ENCODE measurements at regions of chr1 and their contacts with region 1.

Region 1: GRCh38 chr1:231528172-231529029 is at the start of gene TSNAX:
- DNase-seq: peak; percentile 95
- H3K4me3 ChIP-seq: peak within 1 kb of the TSS; percentile 64 to 71 (median 67)
- H3K27ac ChIP-seq: peak within 1 kb of the TSS; percentile 89 to 93 (median 92)
- H3K4me1 ChIP-seq: peaks cover 0 to 45% (median 34%) of the 10 kb centered on the region in 4 donors
- H3K27me3 ChIP-seq: no peaks in the 10 kb centered on the region
- CTCF ChIP-seq: no peak
- EP300 ChIP-seq: peak in 1 of 4 donors; percentile 5
- POLR2A ChIP-seq: peak; percentile 91 to 95
- total RNA-seq, gene TSNAX: 22.4 to 37.5 (median 30.3) TPM

Region 2: DNA sequence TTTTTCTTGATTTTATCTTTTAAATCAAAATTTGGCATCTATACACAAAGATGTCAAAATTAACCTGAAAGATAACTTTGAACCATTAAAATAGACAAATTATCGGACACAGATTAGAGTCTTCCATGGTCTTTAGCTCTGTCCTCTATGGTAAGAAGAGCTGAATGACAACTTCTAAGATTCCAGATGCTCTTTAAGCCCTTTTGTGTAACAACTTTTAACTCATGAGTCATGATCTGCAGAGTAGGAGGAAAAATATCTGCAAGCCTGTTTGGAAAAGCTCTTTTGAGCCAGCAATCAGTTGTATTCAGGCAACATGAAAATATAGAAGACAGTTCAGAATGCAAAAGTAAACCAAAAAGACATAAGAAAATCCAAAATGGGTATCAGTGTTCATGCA is 587.6 kb before region 1 on chr1:
- intact Hi-C with region 1: no loop called
- DNase-seq: no peak
- H3K4me3 ChIP-seq: no peak overlapping the region
- H3K27ac ChIP-seq: no peak overlapping the region
- H3K4me1 ChIP-seq: peaks cover 0 to 7% (median 3%) of the 10 kb centered on the region in 4 donors
- H3K27me3 ChIP-seq: no peaks in the 10 kb centered on the region
- CTCF ChIP-seq: no peak
- EP300 ChIP-seq: no peak
- POLR2A ChIP-seq: no peak

Region 3: DNA sequence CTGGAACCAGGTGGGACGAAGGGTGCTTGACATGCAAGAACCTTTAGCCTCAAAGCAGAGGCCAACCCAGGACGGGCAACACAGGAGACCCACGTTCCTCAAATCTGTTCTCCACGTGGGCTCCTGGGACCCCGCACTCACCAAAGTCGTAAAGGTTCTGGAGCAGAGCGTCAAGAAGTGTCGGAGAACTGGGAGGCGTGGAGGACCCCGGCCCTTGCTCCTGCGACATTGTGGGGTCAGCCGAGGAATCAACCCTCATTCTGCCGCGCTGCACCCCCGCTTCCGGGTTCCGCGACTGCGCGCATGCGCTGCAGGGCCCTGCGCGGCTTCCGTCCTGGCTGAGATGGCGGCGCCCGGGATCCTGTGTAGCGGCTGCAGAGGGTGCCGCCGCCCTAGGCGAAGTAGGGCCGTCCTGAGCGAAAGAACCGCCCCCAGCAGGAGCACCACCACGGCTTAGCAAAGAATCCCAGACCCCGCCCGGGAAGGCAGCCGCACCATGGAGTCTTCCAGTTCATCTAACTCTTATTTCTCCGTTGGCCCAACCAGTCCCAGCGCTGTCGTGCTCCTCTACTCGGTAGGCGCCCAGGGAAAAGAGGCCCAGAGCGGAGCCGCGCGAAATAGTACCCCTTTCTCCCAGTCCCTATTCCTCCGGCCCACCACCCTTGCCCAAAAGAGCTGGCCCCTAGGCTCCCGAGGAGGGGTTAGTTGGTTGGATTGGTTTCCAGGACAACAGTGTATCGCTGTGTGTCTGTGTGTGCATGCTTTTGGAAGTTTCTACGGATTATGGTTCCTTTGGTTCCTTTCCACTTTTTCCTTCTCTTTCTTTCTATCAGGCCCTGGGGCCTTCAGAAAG is 287.3 kb before region 1 on chr1 and contains the start of gene GNPAT:
- intact Hi-C with region 1: loop called (anchors 2 kb)
- DNase-seq: peak; percentile 92
- H3K4me3 ChIP-seq: peak within 1 kb of the TSS; percentile 72 to 85 (median 80)
- H3K27ac ChIP-seq: peak within 1 kb of the TSS; percentile 79 to 90 (median 84)
- H3K4me1 ChIP-seq: peaks cover 0 to 48% (median 32%) of the 10 kb centered on the region in 4 donors
- H3K27me3 ChIP-seq: no peaks in the 10 kb centered on the region
- CTCF ChIP-seq: no peak
- EP300 ChIP-seq: no peak
- POLR2A ChIP-seq: peak; percentile 74 to 86
- total RNA-seq, gene GNPAT: 45.9 to 58.9 (median 50.5) TPM

Region 4: DNA sequence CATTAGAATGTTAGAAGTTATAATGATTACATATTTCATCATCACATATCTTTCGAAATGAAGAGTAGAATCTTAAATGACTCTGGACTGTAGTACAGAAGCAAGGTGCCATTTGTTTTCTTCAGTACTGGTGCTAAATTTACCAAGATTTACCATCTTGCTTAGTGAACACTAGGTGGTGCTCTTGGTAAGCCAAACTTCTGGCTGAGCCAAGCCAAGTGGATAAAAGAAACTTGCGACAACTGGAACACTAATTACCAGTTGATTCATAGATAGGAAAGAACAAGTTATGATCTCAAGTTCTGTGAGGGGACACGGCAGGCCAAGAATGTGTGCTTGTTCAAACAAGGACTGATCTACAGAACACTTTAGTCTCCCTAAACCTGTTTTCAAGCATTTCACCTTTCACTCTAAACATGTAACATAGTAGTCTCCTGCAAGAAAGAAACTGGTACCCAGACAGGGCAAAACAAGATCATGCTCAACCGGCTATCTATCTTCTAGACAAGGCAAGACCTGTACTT is 170.5 kb before region 1 on chr1:
- intact Hi-C with region 1: loop called (anchors 5 kb)
- DNase-seq: peak; percentile 75
- H3K4me3 ChIP-seq: no peak overlapping the region
- H3K27ac ChIP-seq: peak overlapping the region in 3 of 4 donors; percentile 4 to 43 (median 33)
- H3K4me1 ChIP-seq: peaks cover 0 to 14% (median 8%) of the 10 kb centered on the region in 4 donors
- H3K27me3 ChIP-seq: no peaks in the 10 kb centered on the region
- CTCF ChIP-seq: peak; percentile 68 to 82 (median 71)
- EP300 ChIP-seq: no peak
- POLR2A ChIP-seq: no peak

Region 5: DNA sequence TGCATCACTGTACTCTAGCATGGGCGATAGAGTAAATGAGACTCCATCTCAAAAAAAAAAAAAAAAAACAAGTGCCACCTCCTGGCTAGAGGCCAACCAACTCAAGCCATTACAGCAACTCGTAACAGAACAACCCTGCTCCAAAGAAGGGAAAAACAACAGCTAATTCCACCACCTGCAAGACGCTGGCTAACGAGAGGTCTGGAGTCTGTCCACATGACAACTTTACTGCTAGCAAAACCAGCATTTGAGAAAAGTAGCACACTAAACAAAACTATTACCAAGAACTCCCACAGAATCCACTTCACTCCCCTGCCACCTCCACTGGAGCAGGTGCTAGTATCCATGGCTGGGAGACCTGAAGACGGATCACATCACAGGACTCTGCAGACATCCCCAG is 82.3 kb before region 1 on chr1:
- intact Hi-C with region 1: no loop called
- DNase-seq: no peak
- H3K4me3 ChIP-seq: no peak overlapping the region
- H3K27ac ChIP-seq: peak overlapping the region in 1 of 4 donors; percentile 44
- H3K4me1 ChIP-seq: peaks cover 0 to 6% (median 0%) of the 10 kb centered on the region in 4 donors
- H3K27me3 ChIP-seq: no peaks in the 10 kb centered on the region
- CTCF ChIP-seq: no peak
- EP300 ChIP-seq: no peak
- POLR2A ChIP-seq: no peak

Region 6: DNA sequence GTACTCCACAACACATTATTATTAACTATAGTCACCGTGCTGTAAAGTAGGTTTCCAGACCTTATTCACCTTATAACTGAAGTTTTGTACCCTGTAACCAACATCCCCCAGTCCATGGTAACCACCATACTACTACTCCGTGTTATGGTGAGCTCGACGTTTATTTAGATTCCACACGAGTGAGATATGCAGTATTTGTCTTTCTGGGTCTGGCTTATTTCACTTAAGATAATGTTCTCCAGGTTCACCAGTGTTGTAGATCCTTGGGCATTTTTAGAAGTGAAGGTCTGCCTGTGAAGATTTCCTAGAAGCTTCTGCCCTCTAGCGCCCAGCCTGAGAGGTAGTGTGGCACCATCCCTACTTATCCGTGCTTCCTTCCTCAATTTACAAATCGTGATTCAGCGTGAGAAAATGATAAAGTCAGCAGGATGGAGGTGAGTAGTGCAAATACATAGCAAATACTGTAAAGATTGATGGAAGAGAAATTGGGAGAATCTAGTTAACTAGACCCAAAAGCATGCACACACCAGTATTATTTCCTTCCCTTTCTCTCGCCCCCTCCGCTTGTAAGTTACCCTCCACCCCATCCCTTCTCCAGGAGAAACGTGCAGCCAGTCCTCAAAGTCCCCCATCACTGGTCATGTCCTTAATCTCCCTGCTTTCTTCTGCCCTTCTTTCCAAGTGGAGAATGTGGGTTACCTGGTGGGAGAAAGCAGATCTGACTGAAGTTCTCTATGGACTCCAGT is 62.2 kb after region 1 on chr1:
- intact Hi-C with region 1: loop called (anchors 2 kb)
- DNase-seq: peak; percentile 73
- H3K4me3 ChIP-seq: no peak overlapping the region
- H3K27ac ChIP-seq: peak overlapping the region in 3 of 4 donors; percentile 41 to 69 (median 61)
- H3K4me1 ChIP-seq: peaks cover 0 to 23% (median 14%) of the 10 kb centered on the region in 4 donors
- H3K27me3 ChIP-seq: no peaks in the 10 kb centered on the region
- CTCF ChIP-seq: peak; percentile 56 to 73 (median 61)
- EP300 ChIP-seq: peak in 2 of 4 donors; percentile 9 to 62
- POLR2A ChIP-seq: no peak